Activated CD4-positive, alpha-beta memory T cell treated with anti-CD3 and anti-CD28 coated beads for 36 hours (primary cell): ENCODE measurements at regions of chr2 and their contacts with region 1.

Region 1: DNA sequence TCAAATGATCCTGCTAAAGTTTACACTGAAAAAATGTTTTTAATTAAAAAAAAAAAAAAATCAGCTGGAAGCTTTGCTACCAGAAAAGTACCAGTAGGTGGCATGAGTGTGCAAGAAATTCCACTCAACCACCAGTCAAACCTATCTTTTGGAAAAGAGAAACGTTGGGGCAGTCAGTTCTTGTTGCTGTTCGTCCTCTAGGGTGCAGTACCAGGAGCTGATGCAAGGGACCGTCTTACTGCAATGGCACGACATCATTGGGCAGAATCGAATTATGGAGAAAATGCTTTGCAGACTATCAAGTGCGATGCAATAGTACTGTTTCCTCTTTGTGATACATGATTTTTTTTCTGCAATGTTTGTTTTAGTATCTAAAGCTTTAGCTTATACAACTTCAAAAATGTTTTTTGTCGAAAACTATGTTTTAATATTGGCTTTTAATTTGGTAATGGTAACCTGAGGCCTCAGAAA is 18.3 kb downstream of the YPEL5 start:
- DNase-seq: peak; percentile 73
- H3K4me3 Mint-ChIP-seq: no peak overlapping the region
- H3K27ac Mint-ChIP-seq: no peak overlapping the region
- H3K4me1 Mint-ChIP-seq: peaks cover 7% of the 10 kb centered on the region
- H3K27me3 Mint-ChIP-seq: no peaks in the 10 kb centered on the region

Region 2: GRCh38 chr2:30089171-30089570 is 75.9 kb before region 1 on chr2:
- CTCF ChIA-PET with region 1: interaction called, 10 read pairs
- POLR2A ChIA-PET with region 1: no interaction called
- intact Hi-C with region 1: no loop called
- DNase-seq: no peak
- H3K4me3 Mint-ChIP-seq: no peak overlapping the region
- H3K27ac Mint-ChIP-seq: no peak overlapping the region
- H3K4me1 Mint-ChIP-seq: peaks cover 1% of the 10 kb centered on the region
- H3K27me3 Mint-ChIP-seq: peaks cover 20% of the 10 kb centered on the region

Region 3: DNA sequence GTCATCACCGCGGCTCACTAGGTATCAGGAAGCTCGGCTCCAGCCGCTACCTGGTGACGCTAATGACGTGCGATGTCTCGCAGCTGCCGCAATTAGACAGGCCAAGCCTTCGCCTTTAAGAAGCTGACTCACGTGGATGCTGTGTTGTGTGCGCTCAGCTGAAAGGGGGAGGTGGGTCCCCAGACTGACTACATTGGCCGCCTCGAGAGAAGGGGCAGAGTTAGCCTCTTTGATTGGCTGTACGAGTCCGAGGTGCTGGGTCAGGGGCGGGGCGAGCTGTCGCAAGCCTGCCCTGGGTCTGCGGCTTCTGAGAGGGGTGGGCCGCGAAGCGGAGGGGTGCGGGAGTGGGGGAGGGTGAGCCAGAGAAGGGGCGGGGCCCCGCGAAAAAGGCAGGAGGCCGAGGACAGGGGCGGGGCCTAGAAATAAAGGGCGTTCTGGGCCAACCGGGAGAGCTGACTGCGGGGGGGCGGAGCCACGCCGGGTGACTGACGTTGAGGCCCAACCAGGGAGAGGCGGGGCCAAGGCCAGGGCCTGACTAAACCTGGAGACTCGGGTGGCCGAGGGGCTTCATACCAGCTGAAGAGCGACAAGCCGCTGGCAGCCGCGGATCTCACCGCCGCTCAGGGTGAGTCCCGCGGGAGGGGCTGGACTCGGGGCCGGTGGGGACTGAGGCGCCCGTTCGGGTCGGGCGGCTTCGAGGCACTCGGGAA is 18.5 kb before region 1 on chr2 and contains the start of gene YPEL5:
- CTCF ChIA-PET with region 1: interaction called, 102 read pairs
- POLR2A ChIA-PET with region 1: interaction called, 10 read pairs
- intact Hi-C with region 1: no loop called
- DNase-seq: peak; percentile 99
- H3K4me3 Mint-ChIP-seq: peak within 1 kb of the TSS; percentile 82
- H3K27ac Mint-ChIP-seq: peak within 1 kb of the TSS; percentile 95
- H3K4me1 Mint-ChIP-seq: peaks cover 51% of the 10 kb centered on the region
- H3K27me3 Mint-ChIP-seq: no peaks in the 10 kb centered on the region
- total RNA-seq, gene YPEL5: 43.3 to 43.4 TPM

Region 4: GRCh38 chr2:30201990-30202389 is 36.9 kb after region 1 on chr2:
- CTCF ChIA-PET with region 1: interaction called, 11 read pairs
- POLR2A ChIA-PET with region 1: no interaction called
- intact Hi-C with region 1: no loop called
- DNase-seq: no peak
- H3K4me3 Mint-ChIP-seq: no peak overlapping the region
- H3K27ac Mint-ChIP-seq: no peak overlapping the region
- H3K4me1 Mint-ChIP-seq: no peaks in the 10 kb centered on the region
- H3K27me3 Mint-ChIP-seq: no peaks in the 10 kb centered on the region

Region 5: DNA sequence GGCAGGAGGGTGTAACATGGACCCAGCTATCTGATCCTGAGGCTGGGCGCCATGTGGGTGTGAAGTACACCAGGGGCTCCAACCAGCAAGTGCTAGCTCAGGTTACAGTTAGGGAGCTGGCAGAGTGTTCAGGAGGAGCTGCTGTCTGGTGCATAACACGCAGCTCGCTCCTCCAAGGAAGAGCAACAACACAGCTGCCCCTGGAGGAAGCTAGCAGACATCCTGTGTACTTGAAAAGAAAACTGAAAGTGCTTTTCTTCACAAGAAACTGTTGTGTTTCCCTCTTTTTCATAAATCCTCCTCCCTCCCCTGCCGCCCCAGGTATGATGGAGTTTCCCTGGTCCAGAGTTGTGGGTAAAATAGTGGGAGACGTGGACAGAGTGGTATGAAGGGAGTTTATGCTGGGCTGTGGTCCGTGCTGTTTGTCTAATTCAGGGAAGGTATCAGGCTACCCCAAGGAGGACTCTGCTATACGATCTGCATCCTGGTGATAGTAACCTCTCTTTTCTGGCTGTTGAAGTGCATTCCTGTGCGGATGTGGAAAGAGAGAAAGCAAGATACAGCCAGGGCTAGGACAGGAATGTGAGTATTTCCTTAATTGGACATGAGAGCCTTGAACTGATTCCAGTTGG is 60.2 kb after region 1 on chr2:
- CTCF ChIA-PET with region 1: interaction called, 14 read pairs
- POLR2A ChIA-PET with region 1: interaction called, 3 read pairs
- intact Hi-C with region 1: no loop called
- DNase-seq: peak; percentile 62
- H3K4me3 Mint-ChIP-seq: peak overlapping the region; percentile 83
- H3K27ac Mint-ChIP-seq: peak overlapping the region; percentile 97
- H3K4me1 Mint-ChIP-seq: peaks cover 70% of the 10 kb centered on the region
- H3K27me3 Mint-ChIP-seq: no peaks in the 10 kb centered on the region

Region 6: GRCh38 chr2:30239308-30239985 is 74.4 kb after region 1 on chr2:
- CTCF ChIA-PET with region 1: interaction called, 18 read pairs
- POLR2A ChIA-PET with region 1: no interaction called
- intact Hi-C with region 1: loop called (anchors 2 kb)
- DNase-seq: peak; percentile 87
- H3K4me3 Mint-ChIP-seq: peak overlapping the region; percentile 54
- H3K27ac Mint-ChIP-seq: peak overlapping the region; percentile 86
- H3K4me1 Mint-ChIP-seq: peaks cover 93% of the 10 kb centered on the region
- H3K27me3 Mint-ChIP-seq: no peaks in the 10 kb centered on the region

Region 7: DNA sequence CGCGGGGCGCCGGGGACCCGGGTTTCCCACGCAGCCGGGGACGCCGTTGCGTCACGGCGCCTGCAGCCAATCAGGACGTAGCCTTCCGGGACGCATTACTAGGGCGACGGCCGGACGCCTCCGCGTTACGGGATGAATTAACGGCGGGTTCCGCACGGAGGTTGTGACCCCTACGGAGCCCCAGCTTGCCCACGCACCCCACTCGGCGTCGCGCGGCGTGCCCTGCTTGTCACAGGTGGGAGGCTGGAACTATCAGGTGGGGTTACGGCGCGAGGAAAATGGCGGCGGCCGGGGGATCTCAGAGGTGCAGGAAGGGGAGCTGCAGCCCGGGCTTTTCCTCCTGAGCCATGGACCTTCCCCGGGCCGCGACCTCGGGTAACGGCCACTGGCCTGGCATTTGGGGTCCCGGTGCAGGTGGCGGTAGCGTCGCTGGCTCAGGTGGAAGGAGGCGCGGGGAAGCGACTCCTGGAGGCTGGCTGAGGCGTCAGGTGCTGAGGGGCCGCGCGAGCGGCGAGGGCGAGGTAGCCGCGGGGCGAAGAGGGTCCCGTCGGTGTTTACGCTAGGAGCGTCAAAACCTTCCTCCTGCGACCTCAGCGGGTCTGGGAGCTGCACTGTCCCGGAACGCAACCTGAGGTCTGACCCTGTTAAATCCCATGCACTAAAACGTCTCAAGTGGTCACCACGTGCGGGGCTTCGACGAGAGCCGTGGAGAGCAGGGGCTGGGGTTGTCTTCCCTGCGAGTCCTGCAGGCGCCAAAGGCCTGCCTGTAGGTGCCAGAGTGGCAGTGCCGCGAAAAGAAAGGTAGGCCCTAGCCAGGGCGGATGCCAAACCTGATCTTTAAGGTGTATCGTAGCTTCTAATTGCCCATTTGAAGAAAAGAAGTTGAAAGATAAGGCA is 282.3 kb after region 1 on chr2 and contains the start of gene LCLAT1:
- CTCF ChIA-PET with region 1: interaction called, 10 read pairs
- POLR2A ChIA-PET with region 1: no interaction called
- intact Hi-C with region 1: no loop called
- DNase-seq: peak; percentile 90
- H3K4me3 Mint-ChIP-seq: peak within 1 kb of the TSS; percentile 88
- H3K27ac Mint-ChIP-seq: peak within 1 kb of the TSS; percentile 95
- H3K4me1 Mint-ChIP-seq: peaks cover 24% of the 10 kb centered on the region
- H3K27me3 Mint-ChIP-seq: no peaks in the 10 kb centered on the region
- total RNA-seq, gene LCLAT1: 21.5 to 24.3 TPM